ENCODE measurements at regions of chr19 and their contacts with region 1.

Region 1: GRCh38 chr19:54168174-54168917 is 4.6 kb downstream of the TMC4 start:
- DNase-seq: peak; percentile 51 to 93
- H3K4me3 ChIP-seq: no peak overlapping the region
- H3K27ac ChIP-seq: no peak overlapping the region
- H3K4me1 ChIP-seq: peaks cover 0 to 2% of the 10 kb centered on the region in 2 donors
- H3K27me3 ChIP-seq: no peaks in the 10 kb centered on the region
- CTCF ChIP-seq: peak; percentile 71 to 83 (median 73)

Region 2: GRCh38 chr19:53571390-53571789 is 597.0 kb before region 1 on chr19:
- intact Hi-C with region 1: no loop called
- DNase-seq: no peak
- H3K4me3 ChIP-seq: no peak overlapping the region
- H3K27ac ChIP-seq: no peak overlapping the region
- H3K4me1 ChIP-seq: no peaks in the 10 kb centered on the region
- H3K27me3 ChIP-seq: no peaks in the 10 kb centered on the region
- CTCF ChIP-seq: no peak

Region 3: DNA sequence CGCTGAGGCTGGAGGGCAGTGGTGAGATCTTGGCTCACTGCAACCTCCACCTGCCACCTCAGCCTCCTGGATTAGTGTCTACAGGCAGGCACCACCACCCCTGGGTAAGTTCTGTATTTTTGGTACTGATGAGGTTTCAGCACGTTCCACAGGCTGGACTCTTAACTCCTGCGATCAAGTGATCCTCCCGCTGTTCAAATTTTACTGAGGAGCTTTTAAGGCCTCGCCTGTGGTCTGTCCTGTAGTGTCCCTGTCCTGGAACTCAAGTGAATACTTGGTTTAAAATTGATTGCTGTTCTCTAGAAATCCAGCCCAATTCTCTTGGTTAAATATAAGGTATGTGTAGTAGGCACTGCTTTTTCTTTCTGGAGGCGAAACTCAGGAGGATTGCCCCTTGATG is 471.4 kb before region 1 on chr19:
- intact Hi-C with region 1: no loop called
- DNase-seq: no peak
- H3K4me3 ChIP-seq: no peak overlapping the region
- H3K27ac ChIP-seq: no peak overlapping the region
- H3K4me1 ChIP-seq: no peaks in the 10 kb centered on the region
- H3K27me3 ChIP-seq: no peaks in the 10 kb centered on the region
- CTCF ChIP-seq: no peak

Region 4: GRCh38 chr19:54231077-54231931 is 63.0 kb after region 1 on chr19:
- intact Hi-C with region 1: loop called (anchors 1 kb)
- DNase-seq: peak in 1 of 2 donors; percentile 87
- H3K4me3 ChIP-seq: no peak overlapping the region
- H3K27ac ChIP-seq: no peak overlapping the region
- H3K4me1 ChIP-seq: no peaks in the 10 kb centered on the region
- H3K27me3 ChIP-seq: peaks cover 3% of the 10 kb centered on the region
- CTCF ChIP-seq: peak; percentile 78 to 81 (median 80)